Activated CD8-positive, alpha-beta T cell treated with anti-CD3 and anti-CD28 coated beads for 36 hours (primary cell): ENCODE measurements at regions of chr17 and their contacts with region 1.

Region 1: DNA sequence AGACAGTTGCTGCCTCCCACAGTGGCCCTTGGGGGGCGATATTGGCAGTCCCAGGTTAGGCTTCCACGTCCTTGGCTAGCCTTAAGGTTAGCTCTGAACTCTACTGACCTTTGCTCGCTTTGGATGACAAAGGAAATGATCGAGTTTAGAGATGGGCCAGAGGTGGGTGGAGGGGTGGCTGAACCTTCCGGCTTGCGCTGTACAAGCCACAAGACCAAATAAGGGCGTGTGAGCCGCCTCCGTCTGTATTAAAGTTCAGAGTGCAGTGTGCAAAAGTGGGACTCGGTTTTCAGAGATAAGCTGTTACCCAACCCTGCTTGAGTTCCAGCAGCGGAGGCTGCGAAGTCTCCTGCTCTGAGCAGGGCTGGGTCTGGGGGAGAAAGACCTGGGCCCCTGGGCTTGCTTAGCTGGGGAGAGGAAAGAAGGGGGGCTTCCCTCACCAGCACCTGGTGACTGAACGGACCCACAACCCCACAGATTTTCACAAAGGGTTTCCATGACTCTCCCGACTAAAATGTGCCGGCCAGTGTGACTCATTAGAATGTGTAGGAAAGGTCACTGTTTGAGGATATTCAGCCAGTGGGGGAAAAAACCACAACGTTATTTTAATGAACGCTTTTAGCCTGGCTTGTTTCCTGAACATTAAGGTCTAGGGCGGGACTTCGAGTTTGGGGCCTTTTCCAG is 67.2 kb downstream of the CENPV start:
- DNase-seq: peak; percentile 95
- ATAC-seq: peak; percentile 95
- H3K4me3 Mint-ChIP-seq: peak overlapping the region; percentile 71
- H3K27ac Mint-ChIP-seq: peak overlapping the region; percentile 98
- H3K4me1 Mint-ChIP-seq: peaks cover 55% of the 10 kb centered on the region
- H3K27me3 Mint-ChIP-seq: no peaks in the 10 kb centered on the region
- CTCF ChIP-seq: peak; percentile 28

Region 2: GRCh38 chr17:16215273-16215964 is 70.7 kb before region 1 on chr17 and contains the start of gene NCOR1:
- CTCF ChIA-PET with region 1: interaction called, 6 read pairs
- POLR2A ChIA-PET with region 1: interaction called, 30 read pairs
- intact Hi-C with region 1: loop called (anchors 5 kb)
- DNase-seq: peak; percentile 92
- ATAC-seq: peak; percentile 88
- H3K4me3 Mint-ChIP-seq: peak within 1 kb of the TSS; percentile 98
- H3K27ac Mint-ChIP-seq: peak within 1 kb of the TSS; percentile 92
- H3K4me1 Mint-ChIP-seq: peaks cover 35% of the 10 kb centered on the region
- H3K27me3 Mint-ChIP-seq: no peaks in the 10 kb centered on the region
- CTCF ChIP-seq: no peak
- total RNA-seq, gene NCOR1: 123 TPM

Region 3: DNA sequence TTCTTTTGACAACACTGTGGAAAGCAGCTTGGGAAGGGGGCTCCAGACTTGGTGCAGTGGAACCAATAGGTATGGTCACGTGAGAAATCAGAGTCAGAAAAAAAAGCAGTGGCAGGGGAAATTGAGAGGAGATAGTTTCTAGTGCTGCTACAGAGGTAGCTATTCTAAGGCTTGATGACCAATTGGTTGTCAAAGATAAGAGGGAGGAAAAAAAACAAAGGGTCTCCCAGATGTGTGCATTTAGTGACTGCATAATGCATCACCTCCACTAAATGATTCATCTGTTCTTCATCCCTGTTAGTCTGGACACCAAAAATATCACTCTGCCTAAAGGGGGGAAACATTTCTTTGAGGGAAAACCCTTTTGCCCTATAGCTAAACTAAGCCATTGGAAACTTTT is 12.6 kb before region 1 on chr17:
- CTCF ChIA-PET with region 1: interaction called, 19 read pairs
- POLR2A ChIA-PET with region 1: interaction called, 3 read pairs
- intact Hi-C with region 1: no loop called
- DNase-seq: no peak
- ATAC-seq: peak; percentile 60
- H3K4me3 Mint-ChIP-seq: no peak overlapping the region
- H3K27ac Mint-ChIP-seq: peak overlapping the region; percentile 60
- H3K4me1 Mint-ChIP-seq: peaks cover 20% of the 10 kb centered on the region
- H3K27me3 Mint-ChIP-seq: no peaks in the 10 kb centered on the region
- CTCF ChIP-seq: no peak

Region 4: GRCh38 chr17:16304830-16305229 is 18.7 kb after region 1 on chr17:
- CTCF ChIA-PET with region 1: interaction called, 13 read pairs
- POLR2A ChIA-PET with region 1: interaction called, 4 read pairs
- intact Hi-C with region 1: no loop called
- DNase-seq: peak; percentile 32
- ATAC-seq: peak; percentile 72
- H3K4me3 Mint-ChIP-seq: no peak overlapping the region
- H3K27ac Mint-ChIP-seq: no peak overlapping the region
- H3K4me1 Mint-ChIP-seq: peaks cover 2% of the 10 kb centered on the region
- H3K27me3 Mint-ChIP-seq: no peaks in the 10 kb centered on the region
- CTCF ChIP-seq: peak; percentile 40

Region 5: GRCh38 chr17:16353317-16354174 is 67.4 kb after region 1 on chr17 and contains the start of gene CENPV:
- CTCF ChIA-PET with region 1: interaction called, 6 read pairs
- POLR2A ChIA-PET with region 1: interaction called, 10 read pairs
- intact Hi-C with region 1: loop called (anchors 10 kb)
- DNase-seq: peak; percentile 66
- ATAC-seq: peak; percentile 82
- H3K4me3 Mint-ChIP-seq: peak within 1 kb of the TSS; percentile 97
- H3K27ac Mint-ChIP-seq: peak within 1 kb of the TSS; percentile 93
- H3K4me1 Mint-ChIP-seq: peaks cover 18% of the 10 kb centered on the region
- H3K27me3 Mint-ChIP-seq: no peaks in the 10 kb centered on the region
- CTCF ChIP-seq: peak; percentile 9
- total RNA-seq, gene CENPV: 139 to 142 TPM